CD4-positive, alpha-beta memory T cell (primary cell): ENCODE measurements at regions of chr14 and their contacts with region 1.

Region 1: GRCh38 chr14:30558675-30559555 is at the start of gene G2E3:
- DNase-seq: peak; percentile 83 to 85 (median 84)
- H3K4me3 ChIP-seq: peak within 1 kb of the TSS; percentile 93 to 97
- H3K4me3 Mint-ChIP-seq: peak within 1 kb of the TSS; percentile 99 to 100 (median 100)
- H3K27ac ChIP-seq: peak within 1 kb of the TSS; percentile 82
- H3K27ac Mint-ChIP-seq: peak within 1 kb of the TSS; percentile 91 to 99 (median 99)
- H3K4me1 ChIP-seq: peaks cover 28% of the 10 kb centered on the region
- H3K4me1 Mint-ChIP-seq: peaks cover 24 to 49% (median 32%) of the 10 kb centered on the region in 4 donors
- H3K27me3 ChIP-seq: no peaks in the 10 kb centered on the region
- H3K27me3 Mint-ChIP-seq: no peaks in the 10 kb centered on the region
- total RNA-seq, gene G2E3: 26.4 to 32.0 TPM

Region 2: GRCh38 chr14:30355431-30355913 is 203.4 kb before region 1 on chr14:
- CTCF ChIA-PET with region 1: no interaction called
- POLR2A ChIA-PET with region 1: no interaction called
- intact Hi-C with region 1: no loop called
- DNase-seq: no peak
- H3K4me3 ChIP-seq: no peak overlapping the region
- H3K4me3 Mint-ChIP-seq: no peak overlapping the region
- H3K27ac ChIP-seq: no peak overlapping the region
- H3K27ac Mint-ChIP-seq: no peak overlapping the region
- H3K4me1 ChIP-seq: no peaks in the 10 kb centered on the region
- H3K4me1 Mint-ChIP-seq: peaks cover 0 to 8% (median 5%) of the 10 kb centered on the region in 4 donors
- H3K27me3 ChIP-seq: no peaks in the 10 kb centered on the region
- H3K27me3 Mint-ChIP-seq: no peaks in the 10 kb centered on the region

Region 3: DNA sequence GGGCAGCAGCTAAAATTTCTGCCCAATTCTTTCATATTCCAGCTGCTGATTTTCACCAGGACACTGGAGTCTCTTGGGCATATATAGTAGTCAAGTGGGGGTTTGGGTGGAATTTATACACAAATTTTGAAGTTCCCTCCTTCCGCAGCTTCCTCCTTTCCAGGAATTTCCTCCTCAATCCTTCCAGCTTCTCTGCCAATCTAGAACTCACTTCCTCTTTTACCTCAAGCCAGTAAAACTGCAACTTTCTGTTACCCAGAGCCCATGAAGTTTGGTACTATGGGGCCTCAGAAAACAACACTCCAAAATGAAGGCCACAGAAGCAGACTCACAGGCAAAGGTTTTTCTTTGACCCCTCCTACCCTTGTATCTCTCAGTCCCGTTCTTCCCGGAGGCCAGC is 51.7 kb before region 1 on chr14:
- CTCF ChIA-PET with region 1: no interaction called
- POLR2A ChIA-PET with region 1: no interaction called
- intact Hi-C with region 1: no loop called
- DNase-seq: no peak
- H3K4me3 ChIP-seq: no peak overlapping the region
- H3K4me3 Mint-ChIP-seq: no peak overlapping the region
- H3K27ac ChIP-seq: no peak overlapping the region
- H3K27ac Mint-ChIP-seq: no peak overlapping the region
- H3K4me1 ChIP-seq: no peaks in the 10 kb centered on the region
- H3K4me1 Mint-ChIP-seq: no peaks in the 10 kb centered on the region
- H3K27me3 ChIP-seq: no peaks in the 10 kb centered on the region
- H3K27me3 Mint-ChIP-seq: peaks cover 12 to 17% of the 10 kb centered on the region in 2 donors

Region 4: DNA sequence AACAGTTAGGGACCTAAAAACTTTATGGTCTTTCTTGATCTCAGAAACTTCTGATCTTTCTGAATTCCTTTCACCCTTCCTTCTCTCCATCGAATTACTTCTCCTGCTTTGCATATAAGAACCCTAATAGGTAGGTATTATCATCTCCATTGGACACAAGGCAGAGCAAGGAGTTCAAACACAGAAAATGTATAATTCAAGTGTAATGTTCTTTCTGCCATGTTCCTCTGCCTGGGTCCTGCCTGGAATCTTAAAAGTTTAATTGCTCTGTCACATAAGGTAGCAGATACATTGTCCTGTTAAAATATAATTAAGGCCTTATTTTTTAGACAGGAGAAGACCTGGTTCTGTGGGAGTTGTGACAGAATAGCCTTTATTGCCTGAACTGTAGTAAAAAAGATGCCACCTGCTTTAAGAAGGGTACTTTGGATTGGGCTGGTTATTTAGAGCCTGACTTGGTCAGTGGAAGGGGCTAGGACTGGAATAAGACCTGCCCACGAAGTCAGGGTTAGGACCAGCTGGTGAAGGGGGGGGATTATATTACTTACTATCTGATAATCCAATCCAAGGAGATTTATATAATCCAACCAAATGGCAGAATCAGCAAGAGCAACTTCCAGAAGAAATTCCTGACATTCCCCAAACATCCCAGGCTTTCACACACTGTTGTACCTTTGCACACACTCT is 10.4 kb after region 1 on chr14:
- CTCF ChIA-PET with region 1: no interaction called
- POLR2A ChIA-PET with region 1: interaction called, 3 read pairs
- intact Hi-C with region 1: loop called (anchors 1 kb)
- DNase-seq: no peak
- H3K4me3 ChIP-seq: no peak overlapping the region
- H3K4me3 Mint-ChIP-seq: peak overlapping the region in 3 of 8 donors; percentile 10 to 33 (median 31)
- H3K27ac ChIP-seq: no peak overlapping the region
- H3K27ac Mint-ChIP-seq: no peak overlapping the region
- H3K4me1 ChIP-seq: peaks cover 76% of the 10 kb centered on the region
- H3K4me1 Mint-ChIP-seq: peaks cover 71 to 93% (median 82%) of the 10 kb centered on the region in 4 donors
- H3K27me3 ChIP-seq: no peaks in the 10 kb centered on the region
- H3K27me3 Mint-ChIP-seq: no peaks in the 10 kb centered on the region

Region 5: DNA sequence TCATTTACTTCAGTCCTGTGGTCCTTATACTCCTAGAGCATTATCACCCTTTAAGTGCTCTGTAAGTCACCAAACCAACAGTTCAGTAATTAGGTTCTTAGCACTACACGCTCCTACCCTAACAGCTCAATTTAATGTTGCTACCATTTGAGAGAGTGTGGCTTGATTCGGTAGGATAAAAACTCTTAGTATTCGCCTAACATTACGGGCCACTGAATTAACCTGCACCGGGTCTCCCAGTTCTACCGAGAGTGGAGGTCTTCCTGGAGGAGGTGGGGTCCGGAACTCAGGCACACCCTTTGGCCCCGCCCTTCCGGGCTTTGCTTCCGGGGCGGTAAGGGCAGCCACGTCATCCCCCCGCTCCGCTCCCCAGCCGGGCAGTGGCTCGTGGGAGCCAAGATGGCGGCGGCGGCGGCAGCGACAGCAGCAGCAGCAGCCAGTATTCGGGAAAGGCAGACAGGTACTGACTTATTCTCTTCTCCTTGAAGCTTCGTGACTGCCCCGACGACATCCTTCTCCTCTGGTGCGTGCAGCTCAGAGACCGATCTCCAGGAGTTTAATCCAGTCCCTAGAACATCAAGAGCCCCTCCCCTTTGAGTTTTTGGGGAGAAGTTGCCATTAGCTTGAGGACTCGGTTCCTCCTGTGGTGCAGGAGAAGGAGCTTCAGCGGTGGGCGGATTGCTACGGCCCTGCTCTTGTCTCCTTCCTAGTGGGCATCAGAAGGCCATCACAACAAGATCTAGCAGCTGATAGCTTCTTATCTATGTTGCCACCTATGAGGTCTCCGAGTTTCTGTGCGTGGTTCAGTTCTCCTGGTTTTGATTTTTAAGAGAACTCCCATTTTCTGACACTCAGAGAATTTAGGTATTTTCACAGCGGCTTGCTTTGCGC is 63.3 kb after region 1 on chr14 and contains the start of gene SCFD1:
- CTCF ChIA-PET with region 1: interaction called, 3 read pairs
- POLR2A ChIA-PET with region 1: interaction called, 24 read pairs
- intact Hi-C with region 1: loop called (anchors 1 kb)
- DNase-seq: peak; percentile 88 to 93 (median 90)
- H3K4me3 ChIP-seq: peak within 1 kb of the TSS; percentile 74 to 97
- H3K4me3 Mint-ChIP-seq: peak within 1 kb of the TSS; percentile 93 to 99 (median 96)
- H3K27ac ChIP-seq: peak within 1 kb of the TSS; percentile 81
- H3K27ac Mint-ChIP-seq: peak within 1 kb of the TSS; percentile 96 to 99 (median 97)
- H3K4me1 ChIP-seq: peaks cover 52% of the 10 kb centered on the region
- H3K4me1 Mint-ChIP-seq: peaks cover 26 to 53% (median 40%) of the 10 kb centered on the region in 4 donors
- H3K27me3 ChIP-seq: no peaks in the 10 kb centered on the region
- H3K27me3 Mint-ChIP-seq: no peaks in the 10 kb centered on the region
- total RNA-seq, gene SCFD1: 58.1 to 72.6 TPM

Region 6: GRCh38 chr14:30738978-30739377 is 180.1 kb after region 1 on chr14:
- CTCF ChIA-PET with region 1: no interaction called
- POLR2A ChIA-PET with region 1: no interaction called
- intact Hi-C with region 1: no loop called
- DNase-seq: no peak
- H3K4me3 ChIP-seq: no peak overlapping the region
- H3K4me3 Mint-ChIP-seq: no peak overlapping the region
- H3K27ac ChIP-seq: no peak overlapping the region
- H3K27ac Mint-ChIP-seq: no peak overlapping the region
- H3K4me1 ChIP-seq: no peaks in the 10 kb centered on the region
- H3K4me1 Mint-ChIP-seq: no peaks in the 10 kb centered on the region
- H3K27me3 ChIP-seq: peaks cover 4% of the 10 kb centered on the region
- H3K27me3 Mint-ChIP-seq: no peaks in the 10 kb centered on the region

Region 7: GRCh38 chr14:30779196-30779595 is 220.3 kb after region 1 on chr14:
- CTCF ChIA-PET with region 1: no interaction called
- POLR2A ChIA-PET with region 1: no interaction called
- intact Hi-C with region 1: no loop called
- DNase-seq: no peak
- H3K4me3 ChIP-seq: no peak overlapping the region
- H3K4me3 Mint-ChIP-seq: no peak overlapping the region
- H3K27ac ChIP-seq: no peak overlapping the region
- H3K27ac Mint-ChIP-seq: no peak overlapping the region
- H3K4me1 ChIP-seq: no peaks in the 10 kb centered on the region
- H3K4me1 Mint-ChIP-seq: no peaks in the 10 kb centered on the region
- H3K27me3 ChIP-seq: no peaks in the 10 kb centered on the region
- H3K27me3 Mint-ChIP-seq: peaks cover 11 to 13% of the 10 kb centered on the region in 2 donors